ENCODE measurements at regions of chr1 and their contacts with region 1.

Region 1: DNA sequence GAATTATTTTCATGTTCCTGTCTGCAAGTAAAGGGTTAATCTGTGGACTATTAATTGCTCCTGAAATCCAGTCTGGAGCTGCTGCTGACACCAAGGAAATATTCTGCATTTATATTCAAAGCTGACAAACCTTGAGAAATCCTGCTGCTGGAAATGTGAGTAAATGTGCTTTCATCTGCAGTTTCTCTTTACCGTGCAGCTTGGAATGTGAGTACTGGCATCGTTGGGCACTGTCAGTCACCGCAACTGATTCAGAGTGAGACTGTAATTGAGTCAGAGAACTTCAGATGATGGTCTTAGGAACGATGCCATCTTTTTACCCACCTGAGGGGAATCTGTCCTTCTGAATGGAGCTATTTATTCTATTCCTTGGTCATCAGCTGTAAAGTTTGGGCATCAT is 420.6 kb downstream of the SIPA1L2 start:
- DNase-seq: no peak
- H3K4me3 ChIP-seq: no peak overlapping the region
- H3K4me3 Mint-ChIP-seq: no peak overlapping the region
- H3K27ac ChIP-seq: no peak overlapping the region
- H3K27ac Mint-ChIP-seq: no peak overlapping the region
- H3K4me1 ChIP-seq: no peaks in the 10 kb centered on the region
- H3K4me1 Mint-ChIP-seq: no peaks in the 10 kb centered on the region
- H3K27me3 ChIP-seq: peaks cover 0 to 2% of the 10 kb centered on the region in 2 donors
- H3K27me3 Mint-ChIP-seq: peaks cover 0 to 9% (median 3%) of the 10 kb centered on the region in 3 donors
- CTCF ChIP-seq: no peak

Region 2: GRCh38 chr1:232164078-232164963 is 45.0 kb before region 1 on chr1:
- intact Hi-C with region 1: loop called in 1 of 2 experiments (anchors 2 kb)
- DNase-seq: no peak
- H3K4me3 ChIP-seq: no peak overlapping the region
- H3K4me3 Mint-ChIP-seq: no peak overlapping the region
- H3K27ac ChIP-seq: no peak overlapping the region
- H3K27ac Mint-ChIP-seq: no peak overlapping the region
- H3K4me1 ChIP-seq: no peaks in the 10 kb centered on the region
- H3K4me1 Mint-ChIP-seq: no peaks in the 10 kb centered on the region
- H3K27me3 ChIP-seq: no peaks in the 10 kb centered on the region
- H3K27me3 Mint-ChIP-seq: peaks cover 0 to 3% (median 0%) of the 10 kb centered on the region in 3 donors
- CTCF ChIP-seq: no peak

Region 3: GRCh38 chr1:232248276-232248820 is 39.0 kb after region 1 on chr1:
- intact Hi-C with region 1: no loop called
- DNase-seq: no peak
- H3K4me3 ChIP-seq: no peak overlapping the region
- H3K4me3 Mint-ChIP-seq: no peak overlapping the region
- H3K27ac ChIP-seq: no peak overlapping the region
- H3K27ac Mint-ChIP-seq: no peak overlapping the region
- H3K4me1 ChIP-seq: no peaks in the 10 kb centered on the region
- H3K4me1 Mint-ChIP-seq: peaks cover 5% of the 10 kb centered on the region
- H3K27me3 ChIP-seq: peaks cover 34 to 38% of the 10 kb centered on the region in 2 donors
- H3K27me3 Mint-ChIP-seq: peaks cover 26 to 50% (median 48%) of the 10 kb centered on the region in 3 donors
- CTCF ChIP-seq: no peak

Region 4: GRCh38 chr1:232271991-232272589 is 62.7 kb after region 1 on chr1:
- intact Hi-C with region 1: no loop called
- DNase-seq: no peak
- H3K4me3 ChIP-seq: no peak overlapping the region
- H3K4me3 Mint-ChIP-seq: no peak overlapping the region
- H3K27ac ChIP-seq: no peak overlapping the region
- H3K27ac Mint-ChIP-seq: peak overlapping the region in 1 of 7 donors; percentile 28
- H3K4me1 ChIP-seq: no peaks in the 10 kb centered on the region
- H3K4me1 Mint-ChIP-seq: no peaks in the 10 kb centered on the region
- H3K27me3 ChIP-seq: peaks cover 0 to 5% of the 10 kb centered on the region in 2 donors
- H3K27me3 Mint-ChIP-seq: peaks cover 5 to 23% (median 7%) of the 10 kb centered on the region in 3 donors
- CTCF ChIP-seq: no peak